T-cell (primary cell): ENCODE measurements at regions of chr14 and their contacts with region 1.

Region 1: GRCh38 chr14:23095196-23096108 is at the start of gene C14orf119:
- DNase-seq: peak in 34 of 35 experiments; percentile 98 to 100 (median 99)
- ATAC-seq: peak; percentile 87 to 89 (median 88)
- H3K4me3 ChIP-seq: peak within 1 kb of the TSS; percentile 77 to 91
- H3K4me3 Mint-ChIP-seq: no peak within 1 kb of the TSS
- H3K27ac ChIP-seq: peak within 1 kb of the TSS; percentile 94
- H3K27ac Mint-ChIP-seq: no peak within 1 kb of the TSS
- H3K4me1 ChIP-seq: peaks cover 18 to 23% of the 10 kb centered on the region in 2 experiments
- H3K4me1 Mint-ChIP-seq: peaks cover 26 to 55% (median 32%) of the 10 kb centered on the region in 3 donors
- H3K27me3 ChIP-seq: no peaks in the 10 kb centered on the region
- H3K27me3 Mint-ChIP-seq: no peaks in the 10 kb centered on the region
- total RNA-seq, gene C14orf119: 9.5 to 47.7 (median 43.6) TPM

Region 2: DNA sequence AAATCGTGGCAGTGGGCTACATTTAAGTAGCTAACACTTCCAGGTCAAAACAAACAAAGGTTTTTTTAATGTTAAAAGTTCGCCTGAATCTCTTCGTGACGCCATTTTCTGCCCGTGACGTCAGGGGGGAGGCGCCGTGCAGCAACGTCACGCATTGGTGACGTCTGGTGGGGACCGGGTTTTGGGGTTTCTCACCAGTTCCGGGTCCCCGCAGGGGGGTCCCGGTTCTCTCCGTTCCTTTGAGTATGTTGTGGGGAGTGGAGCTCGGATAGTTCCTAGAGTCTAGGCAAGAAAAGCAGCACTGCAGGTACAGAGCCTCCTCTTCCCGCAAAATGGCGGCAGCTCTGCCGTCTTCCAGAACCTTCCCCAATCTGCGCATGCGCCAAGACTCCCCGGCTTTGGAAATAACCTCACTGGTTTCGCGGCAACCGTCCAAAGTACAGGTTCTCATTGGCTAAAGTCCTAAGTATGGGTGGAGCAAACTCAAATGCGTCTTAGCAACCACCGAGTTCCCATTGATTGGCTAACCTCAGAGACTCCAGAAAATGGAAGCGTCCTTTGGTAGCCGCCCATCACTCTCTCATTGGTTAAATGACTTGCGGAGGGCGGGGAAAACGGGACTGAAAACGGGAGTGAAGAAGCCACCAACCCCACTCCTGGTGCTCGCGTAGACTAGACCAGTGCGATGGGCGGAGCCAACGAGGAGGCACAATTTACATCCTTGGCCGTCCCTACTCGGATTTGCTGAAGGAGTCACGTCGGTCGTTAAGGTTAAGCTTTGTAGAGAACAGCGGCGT is 176.4 kb before region 1 on chr14 and contains the start of gene RBM23:
- CTCF ChIA-PET with region 1: interaction called in 1 of 2 experiments, 3 read pairs
- POLR2A ChIA-PET with region 1: interaction called in 1 of 2 experiments, 11 read pairs
- DNase-seq: peak; percentile 98 to 100 (median 100)
- ATAC-seq: peak; percentile 89 to 95 (median 94)
- H3K4me3 ChIP-seq: peak within 1 kb of the TSS; percentile 96 to 99
- H3K4me3 Mint-ChIP-seq: peak within 1 kb of the TSS; percentile 95 to 97 (median 96)
- H3K27ac ChIP-seq: peak within 1 kb of the TSS; percentile 99
- H3K27ac Mint-ChIP-seq: peak within 1 kb of the TSS; percentile 100
- H3K4me1 ChIP-seq: peaks cover 6 to 28% of the 10 kb centered on the region in 2 experiments
- H3K4me1 Mint-ChIP-seq: peaks cover 46 to 50% (median 48%) of the 10 kb centered on the region in 3 donors
- H3K27me3 ChIP-seq: no peaks in the 10 kb centered on the region
- H3K27me3 Mint-ChIP-seq: peaks cover 0 to 4% of the 10 kb centered on the region in 2 donors
- total RNA-seq, gene RBM23: 88.7 to 102 (median 94.7) TPM

Region 3: DNA sequence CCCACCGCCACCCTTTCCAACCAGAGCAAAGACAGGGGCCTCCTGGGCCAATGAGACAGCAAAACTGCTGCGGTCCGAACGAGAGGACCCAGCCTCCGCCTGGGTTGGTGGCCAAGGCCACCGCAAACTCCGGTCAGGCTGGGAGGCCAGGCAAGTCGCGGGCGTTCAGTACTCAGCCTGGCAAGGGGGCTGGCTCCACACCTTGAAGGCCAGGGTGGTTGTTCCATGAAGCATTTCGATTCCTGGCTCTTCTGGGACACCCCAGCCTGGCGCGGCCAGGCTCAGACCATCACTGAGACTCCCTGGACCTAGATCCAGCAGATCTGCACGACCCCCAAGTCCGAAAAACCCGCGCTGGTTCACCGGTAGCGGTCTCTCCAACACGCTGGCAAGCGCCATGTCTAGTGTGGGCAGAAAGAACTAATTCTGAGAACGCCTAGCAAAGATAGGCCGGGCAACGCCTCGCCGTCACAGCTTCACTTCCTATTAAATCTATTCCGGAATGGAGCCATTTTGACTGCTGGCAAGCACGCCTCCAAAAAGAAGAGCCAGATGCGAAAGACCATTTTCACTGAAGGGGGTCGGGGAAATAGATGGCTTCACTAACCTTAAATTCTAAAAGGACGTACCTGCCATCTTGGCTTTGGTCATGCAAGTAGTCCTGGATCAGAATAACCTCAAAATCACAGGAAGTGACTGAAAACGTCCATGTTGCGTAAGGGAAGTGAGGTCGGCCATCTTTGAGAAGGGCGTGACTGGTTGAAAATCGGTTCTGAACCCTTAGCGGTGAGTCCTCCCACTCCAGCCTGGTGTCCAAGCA is 60.8 kb before region 1 on chr14 and contains the start of gene PSMB5:
- CTCF ChIA-PET with region 1: no interaction called
- POLR2A ChIA-PET with region 1: interaction called in 1 of 2 experiments, 11 read pairs
- DNase-seq: peak; percentile 71 to 95 (median 88)
- ATAC-seq: peak; percentile 90 to 95 (median 93)
- H3K4me3 ChIP-seq: peak within 1 kb of the TSS; percentile 79 to 85
- H3K4me3 Mint-ChIP-seq: peak within 1 kb of the TSS; percentile 88 to 98 (median 91)
- H3K27ac ChIP-seq: peak within 1 kb of the TSS; percentile 89
- H3K27ac Mint-ChIP-seq: peak within 1 kb of the TSS; percentile 98 to 99
- H3K4me1 ChIP-seq: peaks cover 9 to 20% of the 10 kb centered on the region in 2 experiments
- H3K4me1 Mint-ChIP-seq: peaks cover 26 to 33% (median 33%) of the 10 kb centered on the region in 3 donors
- H3K27me3 ChIP-seq: no peaks in the 10 kb centered on the region
- H3K27me3 Mint-ChIP-seq: no peaks in the 10 kb centered on the region
- total RNA-seq, gene PSMB5: 20.6 to 43.9 (median 38.0) TPM

Region 4: DNA sequence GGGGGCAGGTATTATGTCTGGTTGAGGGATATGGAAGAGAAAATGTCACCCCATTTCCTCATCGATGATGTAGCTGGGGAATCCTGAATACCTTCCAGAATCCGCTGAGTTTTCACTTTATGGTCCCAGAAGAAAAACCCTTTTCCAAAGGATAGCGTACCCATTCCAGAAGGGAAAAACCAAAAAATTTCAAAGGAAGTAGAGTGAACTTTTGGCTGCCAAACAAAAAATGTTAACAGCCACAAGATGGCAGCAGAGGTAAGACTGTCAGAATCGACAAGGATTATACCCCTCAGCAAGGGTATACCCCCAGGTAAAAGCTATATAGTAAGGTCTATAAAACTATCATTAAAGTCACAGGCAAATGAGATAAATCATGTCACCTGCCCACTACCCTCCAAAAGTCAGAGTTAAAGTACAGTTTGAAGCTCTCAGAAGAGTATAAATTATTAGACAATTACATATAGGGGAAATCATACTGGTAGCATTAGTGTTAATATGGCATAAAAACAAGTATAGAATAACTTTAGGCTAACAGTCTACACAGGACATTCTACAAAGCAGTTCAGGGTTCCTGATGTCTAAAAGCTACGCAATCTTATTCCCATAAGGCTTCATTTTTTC is 18.6 kb before region 1 on chr14:
- CTCF ChIA-PET with region 1: interaction called in 1 of 2 experiments, 39 read pairs
- POLR2A ChIA-PET with region 1: interaction called, 6 to 9 read pairs
- DNase-seq: peak in 5 of 35 experiments; percentile 32 to 67 (median 35)
- ATAC-seq: peak in 3 of 4 experiments; percentile 63 to 75 (median 67)
- H3K4me3 ChIP-seq: no peak overlapping the region
- H3K4me3 Mint-ChIP-seq: no peak overlapping the region
- H3K27ac ChIP-seq: no peak overlapping the region
- H3K27ac Mint-ChIP-seq: peak overlapping the region in 1 of 2 donors; percentile 34
- H3K4me1 ChIP-seq: peaks cover 1 to 4% of the 10 kb centered on the region in 2 experiments
- H3K4me1 Mint-ChIP-seq: peaks cover 10 to 15% (median 11%) of the 10 kb centered on the region in 3 donors
- H3K27me3 ChIP-seq: no peaks in the 10 kb centered on the region
- H3K27me3 Mint-ChIP-seq: no peaks in the 10 kb centered on the region

Region 5: GRCh38 chr14:23228812-23229211 is 133.4 kb after region 1 on chr14:
- CTCF ChIA-PET with region 1: interaction called in 1 of 2 experiments, 11 read pairs
- POLR2A ChIA-PET with region 1: no interaction called
- DNase-seq: no peak
- ATAC-seq: no peak
- H3K4me3 ChIP-seq: no peak overlapping the region
- H3K4me3 Mint-ChIP-seq: no peak overlapping the region
- H3K27ac ChIP-seq: no peak overlapping the region
- H3K27ac Mint-ChIP-seq: no peak overlapping the region
- H3K4me1 ChIP-seq: no peaks in the 10 kb centered on the region
- H3K4me1 Mint-ChIP-seq: no peaks in the 10 kb centered on the region
- H3K27me3 ChIP-seq: no peaks in the 10 kb centered on the region
- H3K27me3 Mint-ChIP-seq: peaks cover 3 to 10% of the 10 kb centered on the region in 2 donors

Region 6: GRCh38 chr14:23320774-23321571 is 225.5 kb after region 1 on chr14 and contains the start of gene PABPN1:
- CTCF ChIA-PET with region 1: interaction called in 1 of 2 experiments, 13 read pairs
- POLR2A ChIA-PET with region 1: interaction called, 3 to 14 read pairs
- DNase-seq: peak; percentile 93 to 100 (median 98)
- ATAC-seq: peak; percentile 87 to 89 (median 88)
- H3K4me3 ChIP-seq: peak within 1 kb of the TSS; percentile 80 to 92
- H3K4me3 Mint-ChIP-seq: peak within 1 kb of the TSS; percentile 88 to 93 (median 90)
- H3K27ac ChIP-seq: peak within 1 kb of the TSS; percentile 98
- H3K27ac Mint-ChIP-seq: peak within 1 kb of the TSS; percentile 98
- H3K4me1 ChIP-seq: peaks cover 10 to 26% of the 10 kb centered on the region in 2 experiments
- H3K4me1 Mint-ChIP-seq: peaks cover 30 to 32% (median 30%) of the 10 kb centered on the region in 3 donors
- H3K27me3 ChIP-seq: peaks cover 0 to 9% of the 10 kb centered on the region in 2 experiments
- H3K27me3 Mint-ChIP-seq: no peaks in the 10 kb centered on the region
- total RNA-seq, gene PABPN1: 182 to 207 (median 186) TPM